GM10248 (cell line): ENCODE measurements at regions of chr11 and their contacts with region 1.

Region 1: DNA sequence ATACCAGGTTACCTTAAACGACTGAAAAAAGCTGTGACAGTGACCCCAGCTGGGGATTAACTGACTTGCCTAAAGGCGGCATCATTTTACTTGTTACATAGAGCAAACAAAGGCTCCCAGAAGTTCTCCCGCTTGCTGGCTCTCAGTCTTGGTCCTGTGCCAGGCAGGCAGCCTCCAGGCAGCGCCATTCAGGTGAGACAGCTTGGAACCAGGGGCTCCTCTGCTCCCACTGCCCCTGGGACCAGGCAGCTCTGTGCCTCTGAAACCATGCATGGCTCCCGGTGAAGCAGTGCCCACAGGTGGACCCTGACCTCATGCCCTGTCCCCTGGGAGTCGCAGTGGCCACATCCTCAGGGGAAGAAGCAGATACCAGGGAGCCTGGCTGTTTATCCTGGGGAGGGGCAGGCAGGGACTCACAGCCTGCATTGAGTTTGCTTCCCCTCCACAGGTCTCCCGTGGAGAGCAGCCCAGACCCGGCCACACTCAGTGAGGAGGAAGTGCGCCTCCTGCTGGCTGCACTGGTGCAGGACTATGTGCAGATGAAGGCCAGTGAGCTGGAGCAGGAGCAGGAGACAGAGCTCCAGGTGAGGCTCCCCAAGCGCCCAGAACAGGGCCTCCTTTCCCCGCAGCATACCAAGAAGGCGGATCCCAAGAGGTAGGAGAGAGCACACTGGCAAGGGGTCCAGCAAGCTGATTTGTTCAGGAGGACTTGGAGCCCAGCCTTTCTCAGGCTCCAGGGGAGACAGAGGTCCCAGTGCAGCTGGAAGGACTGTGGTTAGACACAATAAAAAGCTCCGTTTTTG is 15.6 kb upstream of the CYP2R1 start:
- DNase-seq: no peak
- CTCF ChIP-seq: peak; percentile 88

Region 2: DNA sequence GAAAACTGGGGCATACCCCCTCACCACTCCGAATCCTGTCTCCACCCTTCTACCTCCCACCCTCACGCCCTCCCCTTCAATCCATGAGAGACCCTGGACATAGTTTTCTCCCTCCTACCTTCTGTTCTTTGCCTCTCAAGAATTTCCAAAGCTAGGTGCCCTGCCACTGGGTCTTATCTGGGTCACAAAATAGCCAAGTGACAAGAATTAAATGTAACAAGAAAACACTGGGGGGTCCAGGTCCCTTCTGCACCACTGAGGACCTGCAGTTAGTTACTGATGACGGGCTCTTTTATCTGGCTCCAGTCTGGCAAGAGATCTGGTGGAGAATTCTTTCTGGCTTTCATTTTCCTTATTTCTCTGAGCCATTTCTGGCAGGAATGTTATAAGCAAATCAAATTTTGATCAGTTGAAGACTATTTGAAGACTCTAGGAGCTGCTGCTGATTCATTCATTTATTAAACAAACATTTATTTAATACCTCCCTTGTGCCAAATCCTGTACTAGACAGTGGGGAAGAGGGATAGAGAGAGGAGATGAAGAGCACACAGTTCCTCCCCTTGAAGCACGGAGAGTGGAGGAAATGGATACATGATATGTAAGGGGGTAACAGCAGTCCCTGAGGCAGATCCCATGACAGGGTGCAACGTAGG is 683.9 kb before region 1 on chr11:
- CTCF ChIA-PET with region 1: no interaction called
- POLR2A ChIA-PET with region 1: no interaction called
- DNase-seq: no peak
- CTCF ChIP-seq: no peak

Region 3: DNA sequence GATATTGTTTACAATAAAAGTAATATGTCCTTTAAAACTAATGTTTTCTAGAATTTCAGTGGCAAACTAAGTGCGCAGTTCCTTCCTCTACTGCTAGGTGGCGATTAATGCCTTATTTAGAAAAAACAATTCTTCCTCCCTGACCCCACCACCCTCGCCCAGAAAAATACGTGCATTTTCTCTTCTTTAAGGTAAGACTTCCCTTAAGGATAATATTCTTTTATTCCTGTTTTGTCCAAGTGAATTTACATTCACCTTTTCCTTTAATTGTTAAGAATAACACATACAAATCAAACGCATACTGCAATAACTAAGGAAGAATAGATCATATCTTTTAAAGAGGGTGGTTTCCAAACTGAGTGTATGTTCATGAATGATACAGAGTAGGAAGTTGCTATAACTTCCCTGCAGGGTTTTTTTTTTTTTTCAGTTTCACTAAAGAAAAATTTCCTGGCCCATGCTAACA is 370.4 kb before region 1 on chr11:
- CTCF ChIA-PET with region 1: interaction called, 37 read pairs
- POLR2A ChIA-PET with region 1: no interaction called
- DNase-seq: peak; percentile 67
- CTCF ChIP-seq: peak; percentile 71

Region 4: GRCh38 chr11:14773755-14774154 is 133.9 kb before region 1 on chr11:
- CTCF ChIA-PET with region 1: interaction called, 11 read pairs
- POLR2A ChIA-PET with region 1: no interaction called
- DNase-seq: no peak
- CTCF ChIP-seq: no peak

Region 5: GRCh38 chr11:14809466-14809865 is 98.1 kb before region 1 on chr11:
- CTCF ChIA-PET with region 1: interaction called, 26 read pairs
- POLR2A ChIA-PET with region 1: no interaction called
- DNase-seq: no peak
- CTCF ChIP-seq: no peak

Region 6: GRCh38 chr11:14934641-14935351 is 27.2 kb after region 1 on chr11:
- CTCF ChIA-PET with region 1: interaction called, 16 read pairs
- POLR2A ChIA-PET with region 1: no interaction called
- DNase-seq: no peak
- CTCF ChIP-seq: no peak

Region 7: GRCh38 chr11:15074206-15075161 is 166.9 kb after region 1 on chr11:
- CTCF ChIA-PET with region 1: interaction called, 153 read pairs
- POLR2A ChIA-PET with region 1: no interaction called
- DNase-seq: peak; percentile 63
- CTCF ChIP-seq: peak; percentile 94